Ovary (tissue), 10 donors: ENCODE measurements at regions of chr16 and their contacts with region 1.

Region 1: DNA sequence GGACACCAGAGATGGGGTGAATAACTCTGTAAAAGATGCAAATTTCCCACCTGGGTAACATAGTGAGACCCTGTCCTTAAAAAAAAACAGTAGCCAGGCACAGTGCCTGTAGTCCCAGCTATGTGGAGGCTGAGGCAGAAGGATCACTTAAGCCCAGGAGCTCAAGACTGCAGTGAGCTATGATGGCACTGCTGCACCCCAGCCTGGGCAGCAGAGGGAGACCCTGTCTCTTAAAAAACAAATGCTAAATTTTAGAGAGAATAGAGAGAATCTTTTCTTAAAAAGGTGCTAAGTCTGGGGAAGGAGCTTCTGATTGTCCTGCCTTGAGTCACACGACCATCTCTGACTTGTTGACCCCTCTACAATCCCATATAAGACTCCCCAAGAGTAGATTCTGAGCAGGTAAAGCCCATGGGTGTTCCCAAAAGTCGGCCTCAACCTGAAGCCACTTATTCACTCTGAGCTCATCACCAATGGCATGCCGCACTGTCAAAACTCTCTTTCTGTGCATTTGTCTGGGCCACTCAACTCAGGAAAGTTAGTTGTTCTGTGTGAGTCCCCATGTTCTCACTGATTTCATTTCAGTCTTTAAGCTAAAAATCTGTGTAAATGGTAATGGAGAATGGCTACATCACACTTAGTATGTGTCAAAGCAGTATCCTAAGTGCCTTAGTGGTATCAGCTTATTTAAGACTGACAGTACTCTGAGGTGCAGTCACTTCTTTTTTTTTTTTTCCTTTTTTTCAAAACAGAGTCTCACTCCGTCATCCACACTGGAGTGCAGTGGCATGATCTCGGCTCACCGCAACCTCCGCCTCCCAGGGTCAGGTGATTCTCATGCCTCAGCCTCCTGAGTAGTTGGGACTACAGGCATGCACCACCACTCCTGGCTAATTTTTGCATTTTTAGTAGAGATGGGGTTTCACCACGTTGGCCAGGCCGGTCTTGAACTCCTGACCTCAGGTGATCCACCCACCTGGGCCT is 41.6 kb downstream of the PRKCB start:
- DNase-seq: no peak
- H3K4me3 ChIP-seq: no peak overlapping the region
- H3K27ac ChIP-seq: no peak overlapping the region
- H3K4me1 ChIP-seq: no peaks in the 10 kb centered on the region
- H3K27me3 ChIP-seq: no peaks in the 10 kb centered on the region
- CTCF ChIP-seq: no peak
- EP300 ChIP-seq: no peak
- POLR2A ChIP-seq: no peak

Region 2: DNA sequence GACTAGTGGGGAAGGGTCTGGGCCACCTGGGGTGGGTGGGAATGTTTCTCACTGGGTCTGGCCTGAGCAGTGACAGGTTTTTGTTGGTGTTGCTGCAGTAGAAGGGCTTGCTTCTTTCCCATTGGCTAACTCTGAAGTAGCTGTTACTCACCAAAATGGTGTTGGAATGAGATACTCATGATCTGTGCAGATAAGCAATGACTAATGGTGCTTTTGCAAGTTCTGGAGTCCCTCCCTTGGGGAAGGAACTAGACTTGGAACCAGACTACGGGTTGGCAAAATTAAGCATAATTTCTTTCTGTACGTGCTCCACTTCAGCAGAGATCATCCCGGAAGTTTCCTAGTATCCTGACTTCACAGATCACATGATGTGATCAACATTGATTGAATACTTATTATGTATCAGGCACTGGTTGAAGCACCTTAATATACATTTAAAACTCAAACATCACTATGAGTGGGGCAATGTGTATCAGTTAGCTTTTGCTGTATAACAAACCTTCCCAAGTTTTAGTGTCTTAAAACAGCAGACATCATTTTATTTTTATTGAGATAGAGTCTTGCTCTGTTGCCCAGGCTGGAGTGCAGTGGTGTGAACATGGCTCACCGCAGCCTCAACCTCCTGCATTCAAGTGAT is 92.5 kb before region 1 on chr16:
- intact Hi-C with region 1: no loop called
- DNase-seq: no peak
- H3K4me3 ChIP-seq: no peak overlapping the region
- H3K27ac ChIP-seq: no peak overlapping the region
- H3K4me1 ChIP-seq: no peaks in the 10 kb centered on the region
- H3K27me3 ChIP-seq: no peaks in the 10 kb centered on the region
- CTCF ChIP-seq: no peak
- EP300 ChIP-seq: no peak
- POLR2A ChIP-seq: no peak

Region 3: DNA sequence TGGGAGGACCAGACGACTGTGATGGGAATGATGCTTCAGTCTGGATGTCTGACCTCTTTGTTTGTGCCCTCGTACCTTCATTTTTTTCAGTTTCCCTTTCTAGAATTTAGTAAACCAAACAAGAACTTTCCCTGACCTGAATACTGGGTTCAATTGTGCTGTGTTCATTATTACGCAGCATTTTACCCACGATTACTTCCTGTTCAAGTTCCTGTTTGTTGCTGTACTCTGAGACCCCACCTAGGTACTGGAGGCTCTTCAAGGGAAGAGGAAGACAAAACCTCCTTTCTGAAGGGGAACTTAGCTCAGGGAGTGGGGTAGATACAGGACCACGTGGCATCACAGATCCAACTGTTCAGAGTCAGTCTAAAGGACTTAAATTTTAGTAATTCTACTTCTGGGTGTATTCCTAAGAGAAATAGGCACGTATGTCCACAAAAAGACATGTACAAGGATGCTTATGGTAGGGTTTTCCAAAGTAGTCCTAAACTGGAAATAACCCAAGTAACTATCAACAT is 50.8 kb before region 1 on chr16:
- intact Hi-C with region 1: no loop called
- DNase-seq: no peak
- H3K4me3 ChIP-seq: no peak overlapping the region
- H3K27ac ChIP-seq: no peak overlapping the region
- H3K4me1 ChIP-seq: no peaks in the 10 kb centered on the region
- H3K27me3 ChIP-seq: no peaks in the 10 kb centered on the region
- CTCF ChIP-seq: no peak
- EP300 ChIP-seq: no peak
- POLR2A ChIP-seq: no peak

Region 4: GRCh38 chr16:23930791-23931190 is 53.4 kb after region 1 on chr16:
- intact Hi-C with region 1: loop called in 1 of 4 experiments (anchors 10 kb)
- DNase-seq: no peak
- H3K4me3 ChIP-seq: no peak overlapping the region
- H3K27ac ChIP-seq: no peak overlapping the region
- H3K4me1 ChIP-seq: no peaks in the 10 kb centered on the region
- H3K27me3 ChIP-seq: no peaks in the 10 kb centered on the region
- CTCF ChIP-seq: no peak
- EP300 ChIP-seq: no peak
- POLR2A ChIP-seq: no peak